Right cardiac atrium (tissue), 5 donors: ENCODE measurements at regions of chr16 and their contacts with region 1.

Region 1: GRCh38 chr16:49419006-49419405 is 45.4 kb downstream of the C16orf78 start:
- DNase-seq: no peak
- ATAC-seq: no peak
- H3K4me3 ChIP-seq: no peak overlapping the region
- H3K27ac ChIP-seq: no peak overlapping the region
- H3K4me1 ChIP-seq: no peaks in the 10 kb centered on the region
- H3K27me3 ChIP-seq: no peaks in the 10 kb centered on the region

Region 2: DNA sequence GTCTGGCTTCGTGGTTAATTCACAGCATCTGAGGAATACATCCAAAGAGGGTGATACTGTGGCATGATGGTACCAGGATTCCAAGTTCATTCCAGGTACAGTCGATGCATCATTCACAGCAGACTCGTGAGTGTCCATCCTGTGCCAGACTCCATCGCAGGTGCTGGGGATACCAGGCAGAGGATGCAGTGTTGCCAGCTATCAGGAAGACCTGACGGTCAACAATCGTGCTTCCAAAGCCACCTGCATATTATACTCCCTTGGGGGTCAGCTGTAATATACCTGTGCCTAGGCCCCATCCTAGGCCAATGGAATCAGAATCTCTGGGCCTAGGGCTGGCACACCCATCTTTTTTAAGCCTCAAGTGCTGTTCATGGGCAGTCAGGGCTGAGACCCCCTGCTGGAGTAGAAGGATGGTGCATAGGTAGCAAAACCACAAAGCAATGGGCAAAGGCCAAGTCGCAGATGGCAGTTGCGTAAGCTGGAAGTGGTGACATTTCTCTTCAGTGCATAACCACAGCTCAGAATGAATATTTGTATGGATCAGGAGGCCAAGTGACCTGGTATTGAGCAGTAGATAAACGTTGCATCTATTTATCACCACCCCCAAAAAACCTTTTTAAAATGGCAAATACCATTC is 88.3 kb before region 1 on chr16:
- intact Hi-C with region 1: no loop called
- DNase-seq: no peak
- ATAC-seq: no peak
- H3K4me3 ChIP-seq: no peak overlapping the region
- H3K27ac ChIP-seq: no peak overlapping the region
- H3K4me1 ChIP-seq: no peaks in the 10 kb centered on the region
- H3K27me3 ChIP-seq: no peaks in the 10 kb centered on the region

Region 3: DNA sequence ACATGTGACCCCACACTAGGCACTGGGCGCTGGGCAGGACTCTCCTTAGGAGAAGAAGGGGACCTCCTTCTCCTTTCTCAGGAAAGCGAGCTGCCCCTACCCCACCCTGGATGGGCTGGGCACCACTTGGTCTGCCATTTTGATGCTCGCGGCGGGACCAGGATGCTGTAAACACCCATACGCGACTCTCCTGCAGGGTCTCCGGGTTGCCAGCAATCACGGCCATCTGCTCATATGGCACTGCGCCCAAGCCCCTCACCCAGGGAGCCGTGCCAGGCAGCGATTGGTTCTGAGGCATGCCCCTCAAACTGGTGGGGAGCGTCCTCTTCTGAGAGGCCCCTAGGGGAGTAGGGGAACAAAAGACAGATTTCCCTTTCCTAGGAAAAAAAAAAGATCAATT is 53.6 kb after region 1 on chr16:
- intact Hi-C with region 1: loop called in 1 of 4 experiments (anchors 10 kb)
- DNase-seq: no peak
- ATAC-seq: no peak
- H3K4me3 ChIP-seq: no peak overlapping the region
- H3K27ac ChIP-seq: no peak overlapping the region
- H3K4me1 ChIP-seq: no peaks in the 10 kb centered on the region
- H3K27me3 ChIP-seq: no peaks in the 10 kb centered on the region